IMR-90 (cell line): ENCODE measurements at regions of chr3 and their contacts with region 1.

Region 1: GRCh38 chr3:52278510-52279069 is at the start of gene WDR82:
- DNase-seq: peak; percentile 89
- ATAC-seq: peak; percentile 95
- H3K4me3 ChIP-seq: peak within 1 kb of the TSS; percentile 97
- H3K27ac ChIP-seq: peak within 1 kb of the TSS; percentile 100
- H3K4me1 ChIP-seq: peaks cover 14% of the 10 kb centered on the region
- H3K27me3 ChIP-seq: no peaks in the 10 kb centered on the region
- CTCF ChIP-seq: peak; percentile 58
- POLR2A ChIP-seq: peak; percentile 98
- RAD21 ChIP-seq: peak; percentile 32
- total RNA-seq, gene WDR82: 65.3 and 68.1 TPM in 2 replicates

Region 2: GRCh38 chr3:52238761-52239701 is 39.6 kb before region 1 on chr3 and contains the start of gene TWF2:
- CTCF ChIA-PET with region 1: interaction called, 3 read pairs
- POLR2A ChIA-PET with region 1: interaction called, 9 read pairs
- dilution Hi-C with region 1: no loop called
- in situ Hi-C with region 1: no loop called
- intact Hi-C with region 1: loop called (anchors 5 kb)
- DNase-seq: peak; percentile 78
- ATAC-seq: peak; percentile 84
- H3K4me3 ChIP-seq: peak within 1 kb of the TSS; percentile 83
- H3K27ac ChIP-seq: peak within 1 kb of the TSS; percentile 91
- H3K4me1 ChIP-seq: peaks cover 26% of the 10 kb centered on the region
- H3K27me3 ChIP-seq: no peaks in the 10 kb centered on the region
- CTCF ChIP-seq: 0 out of 2 replicates have a peak, but pooled peaks have one; percentile 25
- POLR2A ChIP-seq: peak; percentile 71
- RAD21 ChIP-seq: no peak
- total RNA-seq, gene TWF2: 105 and 111 TPM in 2 replicates

Region 3: DNA sequence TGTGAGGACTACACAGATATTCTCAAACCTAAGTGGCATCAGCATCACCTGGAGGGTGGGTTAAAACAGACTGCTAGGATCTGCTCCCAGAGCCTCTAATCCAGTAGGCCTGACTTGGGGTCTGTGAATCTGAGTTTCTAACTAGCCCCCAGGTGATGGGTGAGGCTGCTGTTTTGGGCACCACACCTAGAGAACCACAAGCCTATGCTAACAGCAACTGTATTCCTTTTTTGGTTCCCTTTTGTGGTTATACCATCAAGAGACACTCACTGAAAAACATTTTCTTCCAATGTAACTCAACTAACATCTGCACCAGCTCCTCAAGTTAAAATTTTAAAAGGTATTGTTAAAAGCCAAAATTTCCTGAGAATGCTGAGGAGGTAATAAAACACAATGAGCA is 16.1 kb before region 1 on chr3:
- CTCF ChIA-PET with region 1: interaction called, 6 read pairs
- POLR2A ChIA-PET with region 1: no interaction called
- dilution Hi-C with region 1: no loop called
- in situ Hi-C with region 1: no loop called
- intact Hi-C with region 1: loop called (anchors 2 kb)
- DNase-seq: no peak
- ATAC-seq: no peak
- H3K4me3 ChIP-seq: no peak overlapping the region
- H3K27ac ChIP-seq: no peak overlapping the region
- H3K4me1 ChIP-seq: no peaks in the 10 kb centered on the region
- H3K27me3 ChIP-seq: no peaks in the 10 kb centered on the region
- CTCF ChIP-seq: no peak
- POLR2A ChIP-seq: no peak
- RAD21 ChIP-seq: no peak

Region 4: GRCh38 chr3:52328536-52329080 is 50.0 kb after region 1 on chr3:
- CTCF ChIA-PET with region 1: no interaction called
- POLR2A ChIA-PET with region 1: no interaction called
- dilution Hi-C with region 1: no loop called
- in situ Hi-C with region 1: no loop called
- intact Hi-C with region 1: no loop called
- DNase-seq: no peak
- ATAC-seq: no peak
- H3K4me3 ChIP-seq: no peak overlapping the region
- H3K27ac ChIP-seq: no peak overlapping the region
- H3K4me1 ChIP-seq: no peaks in the 10 kb centered on the region
- H3K27me3 ChIP-seq: no peaks in the 10 kb centered on the region
- CTCF ChIP-seq: no peak
- POLR2A ChIP-seq: no peak
- RAD21 ChIP-seq: no peak